Mammary epithelial cell (primary cell): ENCODE measurements at regions of chr4 and their contacts with region 1.

Region 1: DNA sequence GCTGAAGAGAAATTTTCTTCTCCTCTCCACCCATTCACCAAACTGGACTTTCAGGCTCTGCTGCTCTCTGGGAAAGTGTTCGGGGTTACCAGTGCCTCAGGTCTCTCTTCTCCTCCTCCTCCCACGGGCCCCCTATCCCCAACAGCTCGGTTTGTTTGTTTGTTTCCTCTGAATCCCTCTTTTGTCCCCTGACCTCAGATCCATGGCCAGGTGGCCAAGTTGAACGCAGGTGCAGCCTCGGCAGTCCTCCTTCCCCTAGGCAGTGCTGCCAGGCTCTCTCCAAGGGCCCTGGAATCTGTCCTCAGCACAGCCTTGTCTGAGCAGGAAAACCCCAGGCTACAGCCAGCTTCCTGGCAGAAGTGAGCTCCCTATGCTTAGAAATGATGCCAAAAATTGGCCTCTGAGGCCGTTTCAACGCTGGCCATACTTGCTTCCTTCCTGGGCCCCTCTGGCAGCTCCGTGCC is 60.0 kb downstream of the FHDC1 start:
- DNase-seq: peak; percentile 50
- H3K4me3 ChIP-seq: no peak overlapping the region
- H3K27ac ChIP-seq: peak overlapping the region; percentile 22
- H3K4me1 ChIP-seq: peaks cover 38% of the 10 kb centered on the region
- H3K27me3 ChIP-seq: no peaks in the 10 kb centered on the region
- CTCF ChIP-seq: no peak

Region 2: DNA sequence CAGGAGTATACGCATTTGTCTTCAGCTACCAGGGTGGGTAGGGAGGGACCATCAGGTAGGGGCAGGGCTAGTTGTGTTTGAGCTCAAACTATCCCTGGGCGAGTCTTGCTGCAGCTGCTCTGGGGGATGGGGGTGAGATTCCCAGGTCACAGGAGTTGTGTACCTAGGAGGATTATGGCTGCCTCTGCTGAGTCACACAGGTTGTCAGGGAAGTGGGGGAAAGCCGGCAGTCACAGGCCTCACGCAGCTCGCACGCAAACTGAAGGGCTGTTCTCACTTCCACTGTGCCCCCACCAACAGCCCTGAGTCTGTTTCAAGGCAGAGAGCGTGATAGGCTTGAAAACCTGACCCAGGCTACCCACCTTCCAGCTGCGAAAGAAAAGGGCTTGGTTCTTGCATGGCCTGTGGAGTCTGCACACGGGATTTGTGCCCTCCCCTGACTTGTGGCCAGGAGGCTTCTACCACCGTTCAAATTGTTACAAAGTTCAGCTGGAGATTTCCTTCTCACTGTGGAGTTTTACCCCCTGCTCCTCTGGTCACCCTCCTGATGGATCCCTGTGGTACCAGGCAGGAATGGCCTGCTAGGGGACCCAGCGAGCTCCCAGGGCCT is 152.6 kb before region 1 on chr4:
- CTCF ChIA-PET with region 1: no interaction called
- dilution Hi-C with region 1: no loop called
- in situ Hi-C with region 1: no loop called
- intact Hi-C with region 1: loop called (anchors 10 kb)
- DNase-seq: no peak
- H3K4me3 ChIP-seq: no peak overlapping the region
- H3K27ac ChIP-seq: no peak overlapping the region
- H3K4me1 ChIP-seq: no peaks in the 10 kb centered on the region
- H3K27me3 ChIP-seq: no peaks in the 10 kb centered on the region
- CTCF ChIP-seq: no peak

Region 3: DNA sequence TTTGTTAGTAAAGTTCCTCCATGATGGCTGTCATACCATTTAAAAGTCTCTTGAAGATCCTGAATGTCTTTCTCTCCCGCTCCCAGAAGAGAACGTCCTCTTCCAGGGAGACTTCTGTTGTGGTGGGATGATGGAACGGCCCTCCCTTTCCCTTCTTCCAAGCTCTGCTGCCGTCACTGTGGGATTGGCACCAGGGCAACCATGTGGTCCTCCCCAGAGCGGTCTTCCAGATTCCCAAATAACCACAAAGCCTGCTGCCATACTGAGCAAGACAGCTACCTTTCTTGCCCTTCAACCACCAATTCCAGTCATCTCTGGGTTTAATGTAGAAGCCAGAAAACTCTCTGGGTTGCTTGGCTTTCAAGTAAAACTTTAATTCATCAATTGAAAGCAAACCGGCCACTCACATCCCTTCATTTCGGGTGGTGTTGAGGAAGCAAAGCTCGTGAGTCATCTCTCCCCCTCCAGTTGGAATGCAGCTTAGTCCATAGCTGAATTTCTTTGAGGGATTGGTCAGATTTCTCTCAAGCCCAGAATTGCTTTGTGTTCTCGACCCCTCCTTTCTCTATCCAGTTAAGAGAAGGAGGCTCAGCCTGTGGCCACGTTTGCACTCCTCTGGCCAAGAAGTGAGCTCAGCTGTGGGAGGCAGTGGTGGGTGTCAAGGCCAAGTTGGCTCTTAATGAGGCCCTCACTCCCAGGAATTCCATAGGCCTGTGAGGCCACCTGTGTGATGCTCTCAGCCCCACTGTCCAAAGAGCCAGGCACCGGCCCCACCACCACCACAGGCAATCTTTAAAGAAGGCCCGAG is 23.1 kb before region 1 on chr4:
- CTCF ChIA-PET with region 1: no interaction called
- dilution Hi-C with region 1: no loop called
- in situ Hi-C with region 1: no loop called
- intact Hi-C with region 1: loop called (anchors 2 kb)
- DNase-seq: peak; percentile 82
- H3K4me3 ChIP-seq: no peak overlapping the region
- H3K27ac ChIP-seq: peak overlapping the region; percentile 69
- H3K4me1 ChIP-seq: peaks cover 55% of the 10 kb centered on the region
- H3K27me3 ChIP-seq: no peaks in the 10 kb centered on the region
- CTCF ChIP-seq: no peak

Region 4: GRCh38 chr4:153023681-153024394 is 27.7 kb after region 1 on chr4:
- CTCF ChIA-PET with region 1: no interaction called
- dilution Hi-C with region 1: no loop called
- in situ Hi-C with region 1: no loop called
- intact Hi-C with region 1: loop called (anchors 2 kb)
- DNase-seq: peak; percentile 92
- H3K4me3 ChIP-seq: no peak overlapping the region
- H3K27ac ChIP-seq: peak overlapping the region; percentile 62
- H3K4me1 ChIP-seq: peaks cover 38% of the 10 kb centered on the region
- H3K27me3 ChIP-seq: no peaks in the 10 kb centered on the region
- CTCF ChIP-seq: no peak

Region 5: DNA sequence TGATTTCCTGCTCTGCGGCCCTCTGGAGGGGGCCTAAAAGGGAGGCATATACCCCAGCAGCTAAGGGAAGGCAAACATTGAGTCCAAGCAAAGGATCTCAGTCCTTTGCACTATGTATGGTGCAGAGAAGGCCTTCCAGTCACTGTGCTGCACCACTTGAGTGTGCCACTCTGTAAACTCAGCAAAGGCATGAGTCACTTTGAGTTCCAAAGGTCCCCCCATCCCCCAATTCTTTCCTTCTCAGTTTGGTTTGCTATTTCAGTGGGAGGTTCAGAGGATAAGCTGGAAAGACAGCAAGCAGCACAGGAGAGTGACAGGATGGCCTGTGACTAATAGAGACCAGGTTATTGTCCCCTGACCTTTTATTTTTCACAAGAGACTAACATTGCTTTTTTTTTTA is 71.2 kb after region 1 on chr4:
- CTCF ChIA-PET with region 1: no interaction called
- dilution Hi-C with region 1: no loop called
- in situ Hi-C with region 1: no loop called
- intact Hi-C with region 1: no loop called
- DNase-seq: peak; percentile 24
- H3K4me3 ChIP-seq: no peak overlapping the region
- H3K27ac ChIP-seq: no peak overlapping the region
- H3K4me1 ChIP-seq: peaks cover 4% of the 10 kb centered on the region
- H3K27me3 ChIP-seq: no peaks in the 10 kb centered on the region
- CTCF ChIP-seq: no peak

Region 6: DNA sequence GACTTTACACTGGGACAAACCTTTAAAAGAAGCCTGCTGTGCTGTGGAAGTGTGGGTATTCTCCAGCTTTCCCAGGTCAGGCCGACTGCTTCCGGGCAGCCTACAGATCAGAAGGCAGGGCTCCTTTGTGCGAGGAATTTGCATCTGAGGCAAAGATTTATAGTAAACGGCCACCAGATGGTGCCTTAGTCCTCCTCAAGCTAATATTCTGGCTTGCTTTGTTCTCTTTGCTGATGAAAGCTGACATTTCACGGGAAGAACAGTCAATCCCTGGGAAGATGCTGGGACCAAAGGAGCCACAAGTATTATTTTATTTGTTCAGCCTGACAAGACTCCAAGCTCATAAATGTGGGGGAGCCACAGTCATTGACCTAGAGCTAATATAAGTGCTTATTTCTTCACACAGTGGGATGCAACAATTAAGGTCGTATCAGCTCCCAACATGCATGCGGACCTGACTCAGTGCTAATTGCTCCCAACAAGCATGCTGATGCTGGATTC is 87.4 kb after region 1 on chr4:
- CTCF ChIA-PET with region 1: interaction called, 7 read pairs
- dilution Hi-C with region 1: no loop called
- in situ Hi-C with region 1: no loop called
- intact Hi-C with region 1: loop called (anchors 2 kb)
- DNase-seq: peak; percentile 75
- H3K4me3 ChIP-seq: no peak overlapping the region
- H3K27ac ChIP-seq: no peak overlapping the region
- H3K4me1 ChIP-seq: peaks cover 21% of the 10 kb centered on the region
- H3K27me3 ChIP-seq: no peaks in the 10 kb centered on the region
- CTCF ChIP-seq: peak; percentile 58 to 65

Region 7: DNA sequence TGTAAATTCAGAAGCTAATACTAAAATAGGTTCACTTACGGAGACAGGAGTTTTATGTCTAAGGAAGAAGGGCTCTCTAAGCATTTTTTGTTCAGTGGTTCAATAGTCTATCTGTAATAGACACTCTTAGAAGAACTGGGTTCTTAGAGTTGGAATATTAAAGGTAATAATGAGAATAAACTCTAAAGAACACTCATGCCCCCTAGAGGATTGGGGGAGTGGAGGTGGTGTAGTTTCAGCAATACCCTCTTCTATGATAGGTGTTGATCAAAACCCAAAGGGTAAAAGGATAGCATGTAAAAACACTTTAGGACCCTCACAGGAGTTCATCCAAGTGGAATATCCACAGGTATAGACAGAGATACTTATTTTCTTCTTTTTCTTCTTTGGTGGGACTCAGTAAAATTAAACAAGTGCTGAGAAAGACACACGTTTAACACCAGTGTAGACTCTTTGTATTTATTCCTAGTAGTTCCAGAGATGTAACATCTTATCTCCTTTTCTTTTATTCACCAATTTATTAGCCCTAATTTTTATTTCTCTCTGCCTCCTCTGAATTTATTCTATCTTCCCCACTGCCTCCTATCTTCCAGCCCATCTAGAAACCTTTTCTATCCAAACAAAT is 322.7 kb after region 1 on chr4:
- CTCF ChIA-PET with region 1: no interaction called
- dilution Hi-C with region 1: no loop called
- in situ Hi-C with region 1: no loop called
- intact Hi-C with region 1: no loop called
- DNase-seq: peak; percentile 38
- H3K4me3 ChIP-seq: no peak overlapping the region
- H3K27ac ChIP-seq: no peak overlapping the region
- H3K4me1 ChIP-seq: no peaks in the 10 kb centered on the region
- H3K27me3 ChIP-seq: no peaks in the 10 kb centered on the region
- CTCF ChIP-seq: peak; percentile 73 to 82